ENCODE measurements at regions of chr5 and their contacts with region 1.

Region 1: DNA sequence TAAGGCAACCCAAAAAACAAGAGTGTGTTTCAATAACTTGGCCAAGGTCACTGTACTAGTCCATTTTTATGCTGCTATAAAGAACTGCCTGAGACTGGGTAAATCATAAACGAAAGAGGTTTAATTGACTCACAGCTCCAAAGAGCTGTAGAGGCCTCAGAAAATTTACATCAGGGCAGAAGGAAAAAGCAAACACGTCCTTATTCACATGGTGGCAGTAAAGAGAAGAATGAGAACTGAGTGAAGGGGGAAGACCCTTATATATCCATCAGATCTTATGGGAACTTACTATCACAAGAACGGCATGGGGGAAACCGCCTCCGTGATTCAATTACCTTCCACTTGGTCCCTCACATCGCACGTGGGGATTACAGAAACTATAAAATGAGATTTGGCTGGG is 64.3 kb upstream of the CAMK4 start:
- DNase-seq: peak in 1 of 2 donors; percentile 12
- H3K4me3 ChIP-seq: no peak overlapping the region
- H3K27ac ChIP-seq: no peak overlapping the region
- H3K4me1 ChIP-seq: peaks cover 0 to 5% (median 0%) of the 10 kb centered on the region in 4 donors
- H3K27me3 ChIP-seq: no peaks in the 10 kb centered on the region
- CTCF ChIP-seq: no peak
- EP300 ChIP-seq: no peak
- POLR2A ChIP-seq: no peak

Region 2: DNA sequence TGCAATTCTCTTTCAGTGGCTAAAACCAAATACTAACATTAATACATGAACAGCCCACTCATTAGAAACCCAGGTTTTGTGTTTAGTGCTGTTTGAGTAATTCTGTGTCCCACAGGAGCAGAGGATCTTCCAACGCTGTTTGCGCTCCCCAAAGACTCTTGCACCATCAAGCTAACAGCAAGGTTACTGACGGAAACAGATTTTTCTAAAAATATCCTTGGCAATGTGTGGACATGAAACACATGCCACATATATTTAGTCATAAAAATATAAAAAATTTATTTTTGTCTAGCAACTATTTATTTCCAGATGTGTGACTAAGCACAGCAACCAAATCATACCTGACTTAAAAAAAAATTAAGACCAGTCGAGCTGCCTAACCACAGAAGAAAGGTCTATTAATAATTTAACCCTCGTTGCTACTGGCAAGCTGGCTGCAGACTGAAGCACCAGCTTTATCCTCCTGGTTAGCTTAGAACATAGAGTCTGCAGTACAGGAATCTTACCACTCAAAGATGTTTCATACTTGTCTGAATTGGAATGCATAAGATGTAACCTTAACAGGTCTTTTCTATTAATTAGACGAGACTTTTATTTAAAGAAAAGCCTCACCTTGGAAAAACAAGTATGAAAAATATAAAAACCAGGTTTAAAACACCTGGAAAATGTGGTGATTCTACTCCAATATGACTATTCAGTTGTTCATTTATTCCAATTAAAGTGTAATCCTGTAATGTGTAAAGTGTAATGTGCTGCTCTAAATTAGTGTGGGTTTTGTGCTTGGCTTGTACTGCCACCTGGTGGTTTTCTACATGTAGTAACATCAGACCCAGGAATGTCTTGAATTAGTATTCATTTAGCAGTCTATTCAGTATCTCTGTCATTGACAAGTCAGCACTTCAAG is 986.7 kb after region 1 on chr5:
- intact Hi-C with region 1: loop called (anchors 10 kb)
- DNase-seq: peak; percentile 53 to 91
- H3K4me3 ChIP-seq: no peak overlapping the region
- H3K27ac ChIP-seq: peak overlapping the region in 1 of 5 donors; percentile 22
- H3K4me1 ChIP-seq: peaks cover 0 to 6% (median 3%) of the 10 kb centered on the region in 4 donors
- H3K27me3 ChIP-seq: no peaks in the 10 kb centered on the region
- CTCF ChIP-seq: peak in 5 of 7 experiments; percentile 73 to 92 (median 81)
- EP300 ChIP-seq: no peak
- POLR2A ChIP-seq: no peak